GM12878 (cell line): ENCODE measurements at regions of chr17 and their contacts with region 1.

Region 1: GRCh38 chr17:44350733-44351226 is 5.7 kb downstream of the GRN start:
- DNase-seq: peak; percentile 27
- ATAC-seq: peak; percentile 53
- H3K4me3 ChIP-seq: no peak overlapping the region
- H3K27ac ChIP-seq: no peak overlapping the region
- H3K4me1 ChIP-seq: peaks cover 40% of the 10 kb centered on the region
- H3K27me3 ChIP-seq: no peaks in the 10 kb centered on the region; a peak in 1 of 4 replicates
- CTCF ChIP-seq: peak; percentile 87 to 97 (median 88)
- EP300 ChIP-seq: no peak
- POLR2A ChIP-seq: no peak; the same call in 1 of the 2 replicates
- RAD21 ChIP-seq: peak; percentile 72

Region 2: GRCh38 chr17:44310609-44311376 is 40.0 kb before region 1 on chr17:
- CTCF ChIA-PET with region 1: no interaction called
- POLR2A ChIA-PET with region 1: no interaction called
- RAD21 ChIA-PET with region 1: no interaction called
- SMC1A ChIA-PET with region 1: no interaction called
- in situ Hi-C with region 1: no loop called
- intact Hi-C with region 1: no loop called
- DNase-seq: no peak
- ATAC-seq: no peak
- H3K4me3 ChIP-seq: no peak overlapping the region
- H3K27ac ChIP-seq: no peak overlapping the region
- H3K4me1 ChIP-seq: peaks cover 6% of the 10 kb centered on the region
- H3K27me3 ChIP-seq: peaks cover 9 to 19% of the 10 kb centered on the region in 2 experiments
- CTCF ChIP-seq: no peak
- EP300 ChIP-seq: no peak
- POLR2A ChIP-seq: no peak
- RAD21 ChIP-seq: no peak

Region 3: GRCh38 chr17:44331249-44331760 is 19.5 kb before region 1 on chr17:
- CTCF ChIA-PET with region 1: interaction called, 154 read pairs
- POLR2A ChIA-PET with region 1: interaction called, 8 read pairs
- RAD21 ChIA-PET with region 1: interaction called, 18 read pairs
- SMC1A ChIA-PET with region 1: interaction called, 29 read pairs
- in situ Hi-C with region 1: no loop called
- intact Hi-C with region 1: no loop called
- DNase-seq: no peak
- ATAC-seq: peak; percentile 72
- H3K4me3 ChIP-seq: no peak overlapping the region
- H3K27ac ChIP-seq: no peak overlapping the region
- H3K4me1 ChIP-seq: peaks cover 14% of the 10 kb centered on the region
- H3K27me3 ChIP-seq: no peaks in the 10 kb centered on the region
- CTCF ChIP-seq: peak; percentile 69 to 85 (median 84)
- EP300 ChIP-seq: no peak
- POLR2A ChIP-seq: no peak
- RAD21 ChIP-seq: peak; percentile 83

Region 4: GRCh38 chr17:44487170-44487569 is 136.4 kb after region 1 on chr17:
- CTCF ChIA-PET with region 1: no interaction called
- POLR2A ChIA-PET with region 1: no interaction called
- RAD21 ChIA-PET with region 1: no interaction called
- SMC1A ChIA-PET with region 1: no interaction called
- in situ Hi-C with region 1: no loop called
- intact Hi-C with region 1: no loop called
- DNase-seq: no peak
- ATAC-seq: no peak
- H3K4me3 ChIP-seq: no peak overlapping the region
- H3K27ac ChIP-seq: no peak overlapping the region
- H3K4me1 ChIP-seq: no peaks in the 10 kb centered on the region; the same call in 1 of the 2 replicates
- H3K27me3 ChIP-seq: no peaks in the 10 kb centered on the region
- CTCF ChIP-seq: no peak
- EP300 ChIP-seq: no peak
- POLR2A ChIP-seq: no peak
- RAD21 ChIP-seq: no peak